Gastrocnemius medialis (tissue), 4 donors: ENCODE measurements at regions of chr9 and their contacts with region 1.

Region 1: GRCh38 chr9:134443168-134444037 is 117.1 kb downstream of the RXRA start:
- DNase-seq: peak; percentile 91 to 97
- ATAC-seq: peak; percentile 68 to 77
- H3K4me3 ChIP-seq: no peak overlapping the region
- H3K27ac ChIP-seq: peak overlapping the region; percentile 66 to 80 (median 78)
- H3K4me1 ChIP-seq: peaks cover 45% of the 10 kb centered on the region in 2 donors
- H3K27me3 ChIP-seq: no peaks in the 10 kb centered on the region
- CTCF ChIP-seq: peak; percentile 97 to 100 (median 99)
- POLR2A ChIP-seq: peak in 1 of 2 donors; percentile 8

Region 2: DNA sequence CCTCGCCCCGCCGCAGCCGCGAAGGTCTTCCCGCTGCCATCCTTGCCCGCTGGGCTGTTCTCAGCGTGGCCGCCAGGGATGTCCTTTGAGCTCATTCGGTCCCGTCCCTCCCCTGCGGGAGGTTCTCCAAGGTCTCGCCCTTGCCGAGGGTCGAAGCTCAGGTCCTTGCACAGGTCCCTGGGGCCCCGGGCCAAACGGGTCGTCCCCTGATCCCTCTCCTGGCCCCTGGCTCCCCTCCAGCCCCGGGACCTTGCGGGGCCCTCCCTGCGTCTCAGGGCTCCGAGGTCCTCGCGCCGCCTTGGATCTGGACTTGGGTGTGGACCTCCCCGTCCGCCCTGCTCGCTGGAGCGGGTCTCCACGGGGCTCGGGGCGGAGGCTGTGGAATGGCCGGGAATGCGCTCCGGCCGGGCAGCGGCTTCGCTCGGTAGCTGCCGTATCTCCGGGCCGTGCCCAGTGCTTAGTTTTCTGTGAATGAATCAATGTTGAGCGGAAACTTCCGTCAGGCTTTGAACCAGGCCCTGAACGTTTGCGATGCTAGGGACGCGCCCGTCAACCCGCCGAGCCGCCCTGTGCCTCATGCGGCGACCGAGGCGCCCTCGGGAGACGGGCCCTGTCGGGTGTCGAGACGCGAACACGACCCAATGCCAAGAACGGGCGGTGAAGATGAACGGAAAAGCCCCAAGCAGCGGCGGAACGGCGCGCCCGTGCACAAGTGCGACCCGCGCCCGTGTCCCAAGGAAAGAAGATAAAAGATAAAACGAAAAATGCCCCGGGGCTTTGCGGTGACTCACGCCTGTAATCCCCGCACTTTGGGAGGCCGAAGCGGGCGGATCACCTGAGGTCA is 279.8 kb before region 1 on chr9:
- in situ Hi-C with region 1: loop called (anchors 5 to 10 kb)
- intact Hi-C with region 1: no loop called
- DNase-seq: peak; percentile 45 to 60
- ATAC-seq: peak in 1 of 2 donors; percentile 31
- H3K4me3 ChIP-seq: no peak overlapping the region
- H3K27ac ChIP-seq: no peak overlapping the region
- H3K4me1 ChIP-seq: peaks cover 4 to 10% of the 10 kb centered on the region in 2 donors
- H3K27me3 ChIP-seq: no peaks in the 10 kb centered on the region
- CTCF ChIP-seq: peak; percentile 39 to 63 (median 60)
- POLR2A ChIP-seq: no peak

Region 3: GRCh38 chr9:134171316-134172197 is 271.8 kb before region 1 on chr9:
- in situ Hi-C with region 1: loop called (anchors 5 to 10 kb)
- intact Hi-C with region 1: loop called (anchors 1 kb)
- DNase-seq: peak in 1 of 2 donors; percentile 47
- ATAC-seq: peak in 1 of 2 donors; percentile 13
- H3K4me3 ChIP-seq: no peak overlapping the region
- H3K27ac ChIP-seq: peak overlapping the region in 3 of 4 donors; percentile 19 to 64 (median 63)
- H3K4me1 ChIP-seq: peaks cover 16 to 20% of the 10 kb centered on the region in 2 donors
- H3K27me3 ChIP-seq: no peaks in the 10 kb centered on the region
- CTCF ChIP-seq: no peak
- POLR2A ChIP-seq: no peak

Region 4: DNA sequence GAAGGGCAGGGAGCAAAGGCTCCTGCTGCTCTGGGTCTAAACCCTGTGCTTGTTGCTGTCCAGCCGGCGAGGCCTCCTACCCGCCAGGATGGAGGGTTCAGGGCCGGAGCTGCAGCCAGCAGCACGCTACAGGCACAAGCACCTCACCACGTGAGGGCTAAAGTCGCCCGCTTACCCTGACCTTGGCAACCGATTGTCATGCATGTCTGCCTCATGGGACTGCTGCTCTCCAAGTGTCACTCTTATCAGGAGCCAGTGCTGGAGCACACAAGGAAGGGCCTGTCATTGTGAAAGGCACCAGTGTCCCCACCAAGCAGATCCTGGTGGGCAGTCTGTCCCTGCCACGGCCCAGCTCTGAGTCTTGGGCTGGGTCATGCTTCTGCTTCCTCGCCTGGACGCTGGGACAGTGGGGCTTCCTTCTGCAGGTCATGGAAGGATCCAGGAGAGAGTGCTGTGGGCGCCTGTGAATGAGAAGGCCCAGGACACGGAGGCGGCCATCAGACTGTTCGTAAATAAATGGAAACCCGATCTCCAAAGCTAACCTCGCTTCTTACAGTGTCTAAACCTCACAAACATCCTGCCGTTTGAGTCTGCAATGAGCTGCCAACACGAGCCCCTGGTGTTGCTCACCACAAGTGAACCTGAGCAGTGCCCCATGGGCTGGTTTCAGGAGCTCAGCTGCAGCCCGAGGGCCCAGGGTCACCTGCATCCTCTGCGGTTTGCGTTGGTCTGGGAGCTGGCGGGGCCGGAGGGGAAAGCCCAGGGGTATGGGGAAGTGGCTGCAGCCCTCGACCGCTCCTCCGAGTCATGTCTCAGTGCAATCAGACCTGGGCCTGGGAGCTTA is 175.3 kb before region 1 on chr9:
- in situ Hi-C with region 1: no loop called
- intact Hi-C with region 1: loop called (anchors 5 kb)
- DNase-seq: peak; percentile 34 to 51
- ATAC-seq: peak; percentile 73 to 78
- H3K4me3 ChIP-seq: no peak overlapping the region
- H3K27ac ChIP-seq: peak overlapping the region; percentile 38 to 75 (median 56)
- H3K4me1 ChIP-seq: peaks cover 7 to 22% of the 10 kb centered on the region in 2 donors
- H3K27me3 ChIP-seq: no peaks in the 10 kb centered on the region
- CTCF ChIP-seq: no peak
- POLR2A ChIP-seq: no peak

Region 5: GRCh38 chr9:134365791-134366688 is 77.4 kb before region 1 on chr9:
- in situ Hi-C with region 1: loop called in 1 of 4 experiments (anchors 5 kb)
- intact Hi-C with region 1: loop called (anchors 2 kb)
- DNase-seq: peak; percentile 92 to 97
- ATAC-seq: peak; percentile 80
- H3K4me3 ChIP-seq: peak overlapping the region; percentile 30 to 41 (median 38)
- H3K27ac ChIP-seq: peak overlapping the region; percentile 92 to 97 (median 96)
- H3K4me1 ChIP-seq: peaks cover 85 to 87% of the 10 kb centered on the region in 2 donors
- H3K27me3 ChIP-seq: no peaks in the 10 kb centered on the region
- CTCF ChIP-seq: peak in 2 of 5 experiments; percentile 31 to 47
- POLR2A ChIP-seq: peak in 1 of 2 donors; percentile 92

Region 6: GRCh38 chr9:134375430-134376385 is 67.7 kb before region 1 on chr9:
- in situ Hi-C with region 1: loop called in 1 of 4 experiments (anchors 5 kb)
- intact Hi-C with region 1: loop called (anchors 2 kb)
- DNase-seq: peak; percentile 85 to 96
- ATAC-seq: peak; percentile 31 to 34
- H3K4me3 ChIP-seq: peak overlapping the region; percentile 35 to 56 (median 47)
- H3K27ac ChIP-seq: peak overlapping the region; percentile 90 to 100 (median 100)
- H3K4me1 ChIP-seq: peaks cover 97 to 100% of the 10 kb centered on the region in 2 donors
- H3K27me3 ChIP-seq: no peaks in the 10 kb centered on the region
- CTCF ChIP-seq: peak in 2 of 5 experiments; percentile 28 to 36
- POLR2A ChIP-seq: peak in 1 of 2 donors; percentile 74

Region 7: DNA sequence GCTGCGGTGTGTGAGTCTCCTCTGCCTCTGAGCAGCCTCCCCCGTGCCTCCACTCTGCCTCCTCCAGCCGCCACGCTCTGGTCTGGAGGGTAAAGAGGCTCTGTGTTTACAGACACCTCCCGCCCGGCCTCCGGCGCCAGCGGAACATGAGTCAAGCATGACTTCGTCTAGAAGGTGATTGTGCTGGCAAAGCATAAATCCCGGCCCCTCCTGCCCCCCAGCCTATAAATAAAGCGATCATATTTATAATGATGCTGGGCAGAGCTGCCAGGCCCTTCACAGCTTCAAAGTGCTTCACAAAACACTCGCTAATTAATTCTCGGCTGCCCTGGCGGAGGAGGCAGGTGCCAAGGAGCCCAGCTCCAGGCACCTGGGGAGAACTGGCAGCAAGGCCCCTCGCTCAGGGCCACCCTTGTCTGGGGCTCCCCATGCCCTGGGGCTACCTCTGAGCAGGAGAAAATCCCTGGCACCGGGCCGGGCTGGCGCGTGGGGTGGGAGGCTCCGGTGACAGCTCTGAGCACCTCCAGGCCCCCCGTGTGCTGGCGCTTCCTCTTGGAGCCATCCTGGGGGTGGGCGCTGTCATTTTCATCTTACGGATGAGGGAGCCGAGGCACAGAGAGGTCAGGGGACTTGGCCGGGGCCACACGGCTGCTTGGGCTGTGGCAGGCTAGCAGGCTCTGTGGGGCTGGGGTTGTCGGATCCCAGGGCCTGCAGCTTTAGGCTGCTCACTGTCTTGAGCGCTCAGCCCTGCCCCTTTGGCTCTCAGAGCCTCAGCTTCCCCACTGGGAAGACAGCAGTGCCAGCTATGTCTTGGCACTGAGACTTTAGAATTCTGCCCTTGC is 29.3 kb before region 1 on chr9:
- in situ Hi-C with region 1: no loop called
- intact Hi-C with region 1: loop called (anchors 1 kb)
- DNase-seq: peak; percentile 86 to 94
- ATAC-seq: peak; percentile 43 to 48
- H3K4me3 ChIP-seq: peak overlapping the region in 2 of 4 donors; percentile 19 to 23
- H3K27ac ChIP-seq: peak overlapping the region; percentile 90 to 98 (median 98)
- H3K4me1 ChIP-seq: peaks cover 81 to 87% of the 10 kb centered on the region in 2 donors
- H3K27me3 ChIP-seq: no peaks in the 10 kb centered on the region
- CTCF ChIP-seq: no peak
- POLR2A ChIP-seq: peak in 1 of 2 donors; percentile 92

Region 8: DNA sequence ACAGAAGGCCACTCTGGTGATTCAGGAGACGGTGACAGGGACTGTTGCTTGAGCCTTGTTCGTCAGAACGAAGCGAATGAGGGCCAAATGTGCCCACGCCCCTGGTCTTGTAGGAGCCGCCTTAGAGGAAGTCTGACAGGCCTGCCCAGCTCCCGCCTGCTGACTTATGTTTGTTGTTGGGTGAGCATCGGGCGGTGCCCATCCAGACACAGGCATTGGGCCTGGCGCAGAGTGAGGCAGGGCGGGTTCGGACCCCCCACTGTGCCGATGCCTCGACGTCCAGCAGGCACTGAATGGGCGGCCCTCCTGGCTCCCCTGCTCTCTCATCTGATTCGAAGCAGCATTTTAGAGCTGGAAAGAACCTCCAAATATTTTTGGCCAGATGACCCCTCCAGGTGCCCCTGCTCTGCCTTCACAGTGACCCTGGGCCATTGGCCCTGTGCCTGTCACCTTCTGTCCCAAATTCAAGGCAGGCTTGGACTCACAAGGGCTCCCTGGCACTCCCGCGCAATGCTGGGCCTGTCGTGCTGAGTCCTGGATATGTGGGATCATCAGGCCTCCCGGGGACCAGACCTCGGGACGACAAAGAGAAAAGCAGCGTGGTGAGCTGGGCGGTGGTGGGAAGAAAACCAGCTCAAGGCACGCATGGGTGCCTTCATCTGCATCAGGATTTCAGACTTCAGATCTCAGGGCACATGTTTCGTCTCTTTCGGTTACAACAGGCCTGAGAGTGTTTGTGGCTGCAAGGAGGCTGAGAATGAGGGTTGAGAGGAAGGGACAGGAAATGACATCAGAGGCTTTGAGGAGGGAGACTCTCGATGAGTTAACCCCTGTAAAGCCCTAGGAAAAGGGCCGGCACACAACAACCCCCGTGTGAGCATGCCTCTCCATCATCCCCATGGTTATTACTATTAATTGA is 606.9 kb after region 1 on chr9:
- in situ Hi-C with region 1: no loop called
- intact Hi-C with region 1: no loop called
- DNase-seq: no peak
- ATAC-seq: no peak
- H3K4me3 ChIP-seq: no peak overlapping the region
- H3K27ac ChIP-seq: no peak overlapping the region
- H3K4me1 ChIP-seq: no peaks in the 10 kb centered on the region
- H3K27me3 ChIP-seq: peaks cover 0 to 25% (median 20%) of the 10 kb centered on the region in 3 donors
- CTCF ChIP-seq: no peak
- POLR2A ChIP-seq: no peak